CD8-positive, alpha-beta T cell (primary cell): ENCODE measurements at regions of chr1 and their contacts with region 1.

Region 1: DNA sequence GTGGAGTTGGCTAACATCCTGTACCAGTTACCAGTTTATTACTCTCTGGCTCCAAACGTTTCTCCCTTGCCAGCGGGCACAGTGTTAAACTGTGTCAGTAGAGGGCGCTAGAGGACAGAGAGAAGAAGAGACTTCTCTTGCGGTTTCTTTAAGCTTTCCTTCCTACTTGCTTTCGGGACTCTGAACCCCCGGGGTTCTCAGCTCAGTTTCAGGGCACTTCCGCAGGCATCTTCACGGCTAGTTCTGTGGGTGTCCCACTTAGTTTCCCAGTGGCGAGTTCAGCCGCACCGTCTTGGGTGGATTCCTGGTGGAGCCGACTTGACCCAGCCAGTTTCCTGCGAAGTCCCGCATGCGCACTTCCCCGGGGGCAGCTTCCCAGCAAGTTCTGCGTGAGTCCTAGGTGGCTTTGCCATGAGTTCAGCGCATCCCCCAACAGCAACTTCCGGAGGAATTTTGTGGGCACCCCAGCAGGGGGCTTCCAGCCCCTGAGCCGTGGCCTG is 37.9 kb upstream of the BTG2 start:
- DNase-seq: peak; percentile 66 to 92 (median 82)
- ATAC-seq: peak; percentile 58
- H3K4me3 ChIP-seq: peak overlapping the region; percentile 67 to 76
- H3K4me3 Mint-ChIP-seq: peak overlapping the region; percentile 89
- H3K27ac ChIP-seq: peak overlapping the region; percentile 50 to 68
- H3K27ac Mint-ChIP-seq: peak overlapping the region; percentile 82
- H3K4me1 ChIP-seq: peaks cover 25% of the 10 kb centered on the region
- H3K4me1 Mint-ChIP-seq: peaks cover 20% of the 10 kb centered on the region
- H3K27me3 ChIP-seq: no peaks in the 10 kb centered on the region
- H3K27me3 Mint-ChIP-seq: no peaks in the 10 kb centered on the region
- CTCF ChIP-seq: peak; percentile 95

Region 2: GRCh38 chr1:202733251-202733650 is 534.1 kb before region 1 on chr1:
- CTCF ChIA-PET with region 1: no interaction called
- POLR2A ChIA-PET with region 1: no interaction called
- intact Hi-C with region 1: no loop called
- DNase-seq: no peak
- ATAC-seq: no peak
- H3K4me3 ChIP-seq: no peak overlapping the region
- H3K4me3 Mint-ChIP-seq: no peak overlapping the region
- H3K27ac ChIP-seq: no peak overlapping the region
- H3K27ac Mint-ChIP-seq: no peak overlapping the region
- H3K4me1 ChIP-seq: no peaks in the 10 kb centered on the region
- H3K4me1 Mint-ChIP-seq: no peaks in the 10 kb centered on the region
- H3K27me3 ChIP-seq: no peaks in the 10 kb centered on the region
- H3K27me3 Mint-ChIP-seq: no peaks in the 10 kb centered on the region
- CTCF ChIP-seq: no peak

Region 3: DNA sequence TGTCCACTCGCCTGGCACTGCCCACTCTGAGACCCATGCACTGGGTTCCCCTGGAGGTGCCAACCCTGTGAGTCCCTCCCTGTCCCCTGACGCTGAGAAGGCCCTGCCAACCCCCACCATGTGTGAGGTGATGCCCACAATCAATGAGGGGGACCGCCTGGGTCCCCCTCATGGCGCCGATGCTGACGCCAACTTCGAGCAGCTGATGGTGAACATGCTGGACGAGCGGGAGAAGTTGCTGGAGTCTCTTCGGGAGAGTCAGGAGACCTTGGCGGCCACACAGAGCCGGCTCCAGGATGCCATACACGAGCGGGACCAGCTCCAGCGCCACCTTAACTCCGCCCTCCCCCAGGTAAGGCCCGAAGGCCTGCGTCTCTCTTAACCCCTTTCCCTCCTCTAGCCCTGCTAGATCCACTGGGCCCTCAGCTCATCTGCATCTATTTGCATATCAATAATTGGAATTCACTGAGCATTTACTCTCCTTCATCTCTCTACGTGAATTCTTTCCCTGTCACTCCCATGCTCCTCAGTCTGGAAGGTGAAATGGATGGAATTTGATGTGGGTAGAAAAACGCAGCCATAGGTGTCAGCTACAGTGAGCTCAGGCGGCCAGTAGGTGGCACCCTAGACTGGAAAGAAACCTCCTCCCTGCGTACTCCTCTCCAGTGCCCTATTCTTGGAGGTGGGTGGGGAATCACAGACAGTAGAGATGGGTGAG is 228.3 kb before region 1 on chr1:
- CTCF ChIA-PET with region 1: interaction called, 51 read pairs
- POLR2A ChIA-PET with region 1: interaction called, 3 read pairs
- intact Hi-C with region 1: loop called in 1 of 2 experiments (anchors 1 kb)
- DNase-seq: peak; percentile 28 to 74 (median 66)
- ATAC-seq: peak; percentile 94
- H3K4me3 ChIP-seq: no peak overlapping the region
- H3K4me3 Mint-ChIP-seq: no peak overlapping the region
- H3K27ac ChIP-seq: no peak overlapping the region
- H3K27ac Mint-ChIP-seq: no peak overlapping the region
- H3K4me1 ChIP-seq: no peaks in the 10 kb centered on the region
- H3K4me1 Mint-ChIP-seq: peaks cover 2% of the 10 kb centered on the region
- H3K27me3 ChIP-seq: peaks cover 0 to 3% of the 10 kb centered on the region in 2 experiments
- H3K27me3 Mint-ChIP-seq: peaks cover 8% of the 10 kb centered on the region
- CTCF ChIP-seq: peak; percentile 86

Region 4: DNA sequence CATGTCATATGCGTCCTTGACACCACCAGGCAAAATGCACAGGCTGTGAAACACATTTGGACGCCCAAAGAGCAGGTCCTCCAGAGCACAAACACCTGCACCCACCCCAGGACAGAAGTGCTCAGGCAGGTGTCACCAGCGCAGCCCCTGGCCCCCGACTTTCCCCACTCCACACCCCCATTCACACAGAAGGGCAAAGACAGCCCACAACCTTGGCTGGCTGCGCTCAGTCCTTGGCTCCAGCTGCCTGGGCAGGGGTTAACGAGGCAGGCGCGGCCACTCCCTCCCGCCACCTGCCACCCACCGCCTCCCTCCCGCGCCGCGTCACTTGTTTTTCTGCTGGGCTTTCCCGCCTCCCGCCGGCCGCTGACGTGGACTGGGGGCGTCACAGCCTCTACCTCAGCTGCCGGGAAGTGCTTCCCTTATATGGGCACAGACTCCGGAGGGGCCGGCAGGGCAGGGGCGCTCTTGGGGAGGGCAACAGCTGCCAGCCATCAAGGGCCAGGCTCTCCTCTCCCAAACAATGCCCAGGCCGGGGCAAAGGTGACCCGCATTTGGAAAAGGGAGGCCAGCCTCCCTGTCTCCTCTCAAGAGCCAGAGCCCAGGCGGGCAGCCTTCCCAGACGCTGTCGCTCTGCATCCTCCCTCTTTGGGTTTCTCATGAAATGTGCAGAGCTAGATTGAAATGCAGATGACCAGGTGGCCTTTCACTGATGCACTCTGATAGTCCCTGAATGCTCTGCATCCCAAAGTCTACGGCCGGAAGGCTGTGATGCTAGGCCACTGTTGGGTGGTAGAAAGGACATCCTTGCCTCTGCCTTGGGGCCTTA is 23.1 kb after region 1 on chr1:
- CTCF ChIA-PET with region 1: interaction called, 388 read pairs
- POLR2A ChIA-PET with region 1: interaction called, 22 read pairs
- intact Hi-C with region 1: loop called in 1 of 2 experiments (anchors 2 kb)
- DNase-seq: peak; percentile 94 to 99 (median 98)
- ATAC-seq: peak; percentile 60
- H3K4me3 ChIP-seq: peak overlapping the region; percentile 29 to 61
- H3K4me3 Mint-ChIP-seq: peak overlapping the region; percentile 72
- H3K27ac ChIP-seq: peak overlapping the region; percentile 99 to 100
- H3K27ac Mint-ChIP-seq: peak overlapping the region; percentile 98
- H3K4me1 ChIP-seq: peaks cover 67% of the 10 kb centered on the region
- H3K4me1 Mint-ChIP-seq: peaks cover 85% of the 10 kb centered on the region
- H3K27me3 ChIP-seq: no peaks in the 10 kb centered on the region
- H3K27me3 Mint-ChIP-seq: no peaks in the 10 kb centered on the region
- CTCF ChIP-seq: no peak

Region 5: GRCh38 chr1:203326830-203327683 is 59.7 kb after region 1 on chr1:
- CTCF ChIA-PET with region 1: interaction called, 908 read pairs
- POLR2A ChIA-PET with region 1: interaction called, 92 read pairs
- intact Hi-C with region 1: no loop called
- DNase-seq: peak; percentile 86 to 97 (median 94)
- ATAC-seq: peak; percentile 67
- H3K4me3 ChIP-seq: peak overlapping the region; percentile 58 to 60
- H3K4me3 Mint-ChIP-seq: peak overlapping the region; percentile 74
- H3K27ac ChIP-seq: peak overlapping the region; percentile 92 to 97
- H3K27ac Mint-ChIP-seq: peak overlapping the region; percentile 93
- H3K4me1 ChIP-seq: peaks cover 65% of the 10 kb centered on the region
- H3K4me1 Mint-ChIP-seq: peaks cover 65% of the 10 kb centered on the region
- H3K27me3 ChIP-seq: no peaks in the 10 kb centered on the region
- H3K27me3 Mint-ChIP-seq: no peaks in the 10 kb centered on the region
- CTCF ChIP-seq: no peak

Region 6: GRCh38 chr1:203486618-203487370 is 219.4 kb after region 1 on chr1:
- CTCF ChIA-PET with region 1: interaction called, 310 read pairs
- POLR2A ChIA-PET with region 1: interaction called, 22 read pairs
- intact Hi-C with region 1: loop called (anchors 1 kb)
- DNase-seq: peak in 1 of 9 experiments; percentile 15
- ATAC-seq: no peak
- H3K4me3 ChIP-seq: peak overlapping the region in 1 of 2 experiments; percentile 65
- H3K4me3 Mint-ChIP-seq: peak overlapping the region; percentile 82
- H3K27ac ChIP-seq: peak overlapping the region in 1 of 2 experiments; percentile 6
- H3K27ac Mint-ChIP-seq: no peak overlapping the region
- H3K4me1 ChIP-seq: peaks cover 13% of the 10 kb centered on the region
- H3K4me1 Mint-ChIP-seq: peaks cover 10% of the 10 kb centered on the region
- H3K27me3 ChIP-seq: no peaks in the 10 kb centered on the region
- H3K27me3 Mint-ChIP-seq: no peaks in the 10 kb centered on the region
- CTCF ChIP-seq: no peak

Region 7: DNA sequence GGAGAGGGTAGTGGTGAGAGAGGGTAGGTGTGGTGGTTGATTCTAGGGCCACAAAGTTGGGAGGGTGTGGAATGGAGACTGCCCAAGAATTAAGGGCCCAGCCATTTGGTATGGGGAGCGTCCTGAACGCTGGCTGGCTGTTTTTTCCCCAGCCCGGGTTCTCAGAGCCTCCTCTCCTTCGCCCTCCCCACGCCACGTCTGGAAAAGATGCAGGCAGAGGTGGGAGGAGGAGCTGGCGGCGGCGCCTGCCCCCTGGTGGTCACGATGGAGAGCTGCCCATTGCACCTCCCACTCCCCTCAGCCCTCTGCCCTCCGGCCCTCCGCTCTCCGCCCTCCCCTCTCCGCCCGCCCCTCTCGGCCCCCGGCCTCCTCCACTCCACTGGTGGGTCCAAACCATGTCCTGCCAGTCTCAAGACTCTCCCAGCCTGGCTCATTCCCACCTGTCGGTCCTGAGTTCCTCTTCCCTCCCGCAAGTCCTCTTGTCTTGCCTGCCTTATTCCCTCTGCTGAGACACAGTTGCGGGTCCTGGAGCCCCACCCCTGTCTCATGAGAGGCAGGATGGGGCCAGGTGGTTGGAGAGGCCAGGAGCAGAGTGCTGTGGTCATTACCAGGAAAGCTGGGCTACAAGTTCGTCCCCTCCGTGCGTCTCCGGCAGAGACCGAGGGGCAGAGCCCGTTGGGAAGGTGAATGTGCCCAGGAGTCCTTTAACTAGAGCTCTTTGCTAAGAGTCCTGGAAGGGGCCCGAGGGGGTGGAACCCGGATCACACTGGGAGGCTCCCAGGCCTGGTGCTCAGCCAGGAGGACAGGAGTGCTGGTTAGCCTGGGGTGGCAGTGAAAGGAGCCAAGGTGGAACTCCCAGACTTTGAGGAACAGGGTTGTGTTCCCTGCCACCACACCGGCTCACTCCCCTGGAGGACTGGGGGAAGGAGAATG is 861.8 kb after region 1 on chr1:
- CTCF ChIA-PET with region 1: interaction called, 3 read pairs
- POLR2A ChIA-PET with region 1: no interaction called
- intact Hi-C with region 1: loop called in 1 of 2 experiments (anchors 5 kb)
- DNase-seq: peak; percentile 27 to 82 (median 57)
- ATAC-seq: peak; percentile 89
- H3K4me3 ChIP-seq: no peak overlapping the region
- H3K4me3 Mint-ChIP-seq: no peak overlapping the region
- H3K27ac ChIP-seq: no peak overlapping the region
- H3K27ac Mint-ChIP-seq: no peak overlapping the region
- H3K4me1 ChIP-seq: peaks cover 7% of the 10 kb centered on the region
- H3K4me1 Mint-ChIP-seq: peaks cover 10% of the 10 kb centered on the region
- H3K27me3 ChIP-seq: no peaks in the 10 kb centered on the region
- H3K27me3 Mint-ChIP-seq: no peaks in the 10 kb centered on the region
- CTCF ChIP-seq: peak; percentile 71